Pancreas (tissue), 10 donors: ENCODE measurements at regions of chr2 and their contacts with region 1.

Region 1: GRCh38 chr2:28250006-28250405 is 142.7 kb upstream of the FOSL2 start:
- DNase-seq: no peak
- ATAC-seq: no peak
- H3K4me3 ChIP-seq: no peak overlapping the region
- H3K27ac ChIP-seq: no peak overlapping the region
- H3K4me1 ChIP-seq: no peaks in the 10 kb centered on the region
- H3K27me3 ChIP-seq: no peaks in the 10 kb centered on the region
- CTCF ChIP-seq: no peak

Region 2: GRCh38 chr2:27537287-27537686 is 712.7 kb before region 1 on chr2:
- intact Hi-C with region 1: no loop called
- DNase-seq: no peak
- ATAC-seq: no peak
- H3K4me3 ChIP-seq: no peak overlapping the region
- H3K27ac ChIP-seq: no peak overlapping the region
- H3K4me1 ChIP-seq: no peaks in the 10 kb centered on the region
- H3K27me3 ChIP-seq: no peaks in the 10 kb centered on the region
- CTCF ChIP-seq: no peak

Region 3: DNA sequence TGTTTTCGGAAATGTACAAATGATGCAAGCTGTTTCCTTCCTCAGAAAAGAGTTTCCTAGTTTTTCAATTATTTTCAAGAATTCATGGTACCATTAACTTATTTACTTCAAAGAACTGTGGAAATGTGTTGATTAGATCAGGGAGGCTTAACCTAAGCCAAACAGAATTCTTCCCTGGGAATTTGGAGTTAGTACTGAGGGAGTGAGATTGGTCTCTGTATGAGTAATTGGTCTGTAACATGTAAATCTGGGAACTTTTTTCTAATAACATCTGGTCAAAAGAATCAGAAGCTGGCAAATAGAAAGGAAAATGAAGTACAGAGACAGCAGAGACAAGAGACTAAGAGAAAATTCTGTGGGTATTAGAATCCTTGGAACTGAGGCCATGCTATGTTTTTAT is 213.7 kb before region 1 on chr2:
- intact Hi-C with region 1: no loop called
- DNase-seq: no peak
- ATAC-seq: no peak
- H3K4me3 ChIP-seq: no peak overlapping the region
- H3K27ac ChIP-seq: no peak overlapping the region
- H3K4me1 ChIP-seq: no peaks in the 10 kb centered on the region
- H3K27me3 ChIP-seq: no peaks in the 10 kb centered on the region
- CTCF ChIP-seq: no peak

Region 4: DNA sequence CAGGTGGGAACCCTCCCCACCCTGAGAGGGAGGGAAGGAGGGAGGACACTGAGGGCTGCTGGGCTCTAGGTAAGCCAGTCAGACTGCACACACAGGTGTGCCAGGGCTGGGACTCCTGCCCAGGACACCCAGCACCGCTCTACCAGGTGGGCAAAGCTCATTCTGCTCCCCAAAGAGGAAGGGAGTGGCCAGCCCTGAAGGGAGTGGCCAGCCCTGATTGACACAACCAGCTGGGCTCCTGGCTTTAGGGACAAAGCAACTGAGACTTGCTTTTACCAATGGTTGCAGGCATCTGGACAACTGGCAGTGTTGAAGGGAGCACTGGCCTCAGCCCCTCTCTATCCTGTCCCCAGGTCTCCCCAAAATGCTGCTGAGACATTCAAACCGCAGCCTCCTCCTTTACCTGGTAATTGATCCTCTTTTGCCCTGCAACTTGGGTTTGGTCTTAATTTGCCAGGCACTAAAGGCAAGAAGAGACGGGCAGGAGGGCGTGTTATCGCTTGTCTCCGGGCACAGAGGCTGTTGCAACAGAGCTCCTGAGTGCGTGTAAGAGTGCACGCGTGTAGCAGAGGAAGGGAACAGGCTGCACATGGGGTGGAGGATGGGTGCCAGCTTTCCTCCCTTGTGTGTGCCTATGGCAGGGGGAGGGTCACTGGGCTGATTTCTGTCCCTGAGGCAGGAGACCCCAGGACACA is 128.1 kb after region 1 on chr2:
- intact Hi-C with region 1: loop called in 1 of 3 experiments (anchors 5 kb)
- DNase-seq: peak in 4 of 6 donors; percentile 60 to 70 (median 68)
- ATAC-seq: peak; percentile 78 to 96 (median 85)
- H3K4me3 ChIP-seq: no peak overlapping the region
- H3K27ac ChIP-seq: no peak overlapping the region
- H3K4me1 ChIP-seq: peaks cover 0 to 3% (median 0%) of the 10 kb centered on the region in 3 donors
- H3K27me3 ChIP-seq: no peaks in the 10 kb centered on the region
- CTCF ChIP-seq: no peak